ENCODE measurements at regions of chr3 and their contacts with region 1.

Region 1: DNA sequence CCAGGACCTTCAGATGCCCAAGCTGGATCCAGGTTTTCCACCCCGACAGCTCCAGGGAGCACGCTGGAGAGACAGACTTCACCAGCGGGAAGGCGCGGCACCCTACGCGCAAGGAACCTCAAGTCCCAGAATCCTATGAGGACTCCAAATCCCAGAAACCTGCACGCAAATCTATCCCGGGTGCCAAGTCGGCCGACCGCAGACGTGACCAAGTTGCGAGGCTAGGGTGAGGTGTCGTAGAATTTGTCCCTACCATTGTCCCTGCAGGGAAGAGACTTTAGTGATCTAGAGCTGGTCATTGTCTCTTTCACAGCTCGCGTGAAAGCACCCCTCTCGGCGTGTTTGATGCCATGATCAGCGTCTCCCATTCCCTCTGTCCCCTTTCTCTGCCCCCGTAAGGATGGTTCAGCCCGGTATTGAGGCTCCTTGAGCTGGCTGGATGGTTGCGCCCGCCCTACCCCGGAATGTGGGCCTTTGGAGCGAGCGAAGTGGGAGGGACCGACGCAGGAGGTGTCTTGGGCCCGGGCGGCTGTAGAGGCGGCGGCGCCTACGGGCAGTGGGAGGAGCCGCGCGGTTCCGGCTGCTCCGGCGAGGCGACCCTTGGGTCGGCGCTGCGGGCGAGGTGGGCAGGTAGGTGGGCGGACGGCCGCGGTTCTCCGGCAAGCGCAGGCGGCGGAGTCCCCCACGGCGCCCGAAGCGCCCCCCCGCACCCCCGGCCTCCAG is at the start of gene PRKCI:
- DNase-seq: peak; percentile 98
- ATAC-seq: peak; percentile 96 to 97
- H3K4me3 ChIP-seq: peak within 1 kb of the TSS; percentile 82
- H3K27ac ChIP-seq: peak within 1 kb of the TSS; percentile 97 to 98
- H3K4me1 ChIP-seq: peaks cover 27% of the 10 kb centered on the region
- CTCF ChIP-seq: no peak
- EP300 ChIP-seq: no peak
- POLR2A ChIP-seq: peak; percentile 72
- RAD21 ChIP-seq: no peak
- polyA plus RNA-seq, gene PRKCI: 31.2 and 52.6 TPM in 2 replicates

Region 2: GRCh38 chr3:170233530-170233929 is 11.4 kb after region 1 on chr3:
- CTCF ChIA-PET with region 1: interaction called, 7 read pairs
- POLR2A ChIA-PET with region 1: interaction called, 11 read pairs
- DNase-seq: peak in 1 of 2 experiments; percentile 64
- ATAC-seq: peak in 1 of 2 experiments; percentile 72; a peak in 3 of 6 replicates
- H3K4me3 ChIP-seq: no peak overlapping the region
- H3K27ac ChIP-seq: peak overlapping the region in 1 of 2 experiments; percentile 63; a peak in 3 of 6 replicates
- H3K4me1 ChIP-seq: peaks cover 29% of the 10 kb centered on the region
- CTCF ChIP-seq: no peak
- EP300 ChIP-seq: no peak
- POLR2A ChIP-seq: no peak
- RAD21 ChIP-seq: no peak